ENCODE measurements at regions of chr2 and their contacts with region 1.

Region 1: GRCh38 chr2:43343573-43344304 is 117.3 kb upstream of the ZFP36L2 start:
- DNase-seq: peak; percentile 72 to 84
- ATAC-seq: peak; percentile 66 to 71
- H3K4me3 ChIP-seq: no peak overlapping the region
- H3K27ac ChIP-seq: peak overlapping the region; percentile 81 to 88 (median 86)
- H3K4me1 ChIP-seq: peaks cover 69 to 74% of the 10 kb centered on the region in 2 donors
- H3K27me3 ChIP-seq: no peaks in the 10 kb centered on the region
- CTCF ChIP-seq: no peak
- POLR2A ChIP-seq: no peak

Region 2: DNA sequence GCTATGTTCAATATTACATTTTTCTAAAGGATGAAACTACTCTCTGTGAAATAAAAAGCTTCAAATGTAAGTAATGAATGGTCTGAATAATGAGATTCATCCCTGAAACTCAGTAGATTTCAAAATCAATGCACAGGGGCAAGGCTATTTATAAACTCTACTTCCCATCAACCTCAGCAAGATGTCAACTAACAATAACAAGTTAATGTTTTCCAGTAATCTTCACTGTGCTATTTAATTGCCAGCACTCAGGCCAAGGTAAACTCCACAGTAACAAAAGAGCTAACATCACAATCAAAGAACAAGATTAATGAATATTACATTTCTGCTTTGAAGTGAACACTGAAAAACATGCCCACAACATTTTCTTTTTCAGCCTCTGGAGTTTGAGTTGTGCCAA is 27.0 kb after region 1 on chr2:
- in situ Hi-C with region 1: no loop called
- intact Hi-C with region 1: loop called (anchors 2 kb)
- DNase-seq: no peak
- ATAC-seq: no peak
- H3K4me3 ChIP-seq: no peak overlapping the region
- H3K27ac ChIP-seq: peak overlapping the region; percentile 1 to 48 (median 19)
- H3K4me1 ChIP-seq: peaks cover 21 to 42% of the 10 kb centered on the region in 2 donors
- H3K27me3 ChIP-seq: no peaks in the 10 kb centered on the region
- CTCF ChIP-seq: no peak
- POLR2A ChIP-seq: no peak

Region 3: DNA sequence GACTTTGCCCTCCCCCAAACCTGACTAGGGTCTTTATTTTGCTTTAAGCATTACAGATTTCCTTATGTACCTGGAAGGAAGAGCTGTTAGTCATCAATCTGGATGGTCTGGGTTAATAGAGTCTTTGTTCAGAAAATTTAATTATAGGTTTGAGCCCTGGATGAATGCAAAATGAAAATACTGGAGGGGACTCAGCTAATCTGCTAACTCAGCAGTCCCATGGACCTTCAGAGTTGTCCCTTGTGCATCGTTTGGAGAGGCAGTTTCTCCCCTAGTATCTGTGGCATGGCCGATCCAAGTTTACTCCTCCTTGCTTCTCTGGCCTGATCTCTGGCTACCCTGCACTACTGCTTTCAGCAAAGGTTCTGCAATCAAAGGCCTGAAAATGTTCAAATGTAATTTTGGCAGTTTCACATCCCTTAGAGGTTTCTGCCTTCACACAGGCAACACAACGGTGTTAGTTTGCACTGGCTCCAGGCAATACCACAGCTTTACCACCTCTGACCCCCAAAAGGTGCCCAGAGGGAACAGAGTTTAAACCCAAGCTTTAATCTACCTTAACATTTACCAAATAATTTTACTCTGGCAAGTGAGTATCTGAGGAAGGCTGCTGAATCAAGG is 117.8 kb after region 1 on chr2:
- in situ Hi-C with region 1: no loop called
- intact Hi-C with region 1: loop called (anchors 5 kb)
- DNase-seq: no peak
- ATAC-seq: no peak
- H3K4me3 ChIP-seq: no peak overlapping the region
- H3K27ac ChIP-seq: peak overlapping the region in 3 of 4 donors; percentile 53 to 66 (median 56)
- H3K4me1 ChIP-seq: peaks cover 61 to 62% of the 10 kb centered on the region in 2 donors
- H3K27me3 ChIP-seq: no peaks in the 10 kb centered on the region
- CTCF ChIP-seq: no peak
- POLR2A ChIP-seq: no peak

Measured in gastrocnemius medialis (tissue), 4 donors.